ENCODE measurements at regions of chr15 and their contacts with region 1.

Region 1: GRCh38 chr15:101641166-101641764 is 10.9 kb downstream of the TM2D3 start:
- DNase-seq: no peak
- H3K4me3 ChIP-seq: no peak overlapping the region
- CTCF ChIP-seq: peak; percentile 75

Region 2: DNA sequence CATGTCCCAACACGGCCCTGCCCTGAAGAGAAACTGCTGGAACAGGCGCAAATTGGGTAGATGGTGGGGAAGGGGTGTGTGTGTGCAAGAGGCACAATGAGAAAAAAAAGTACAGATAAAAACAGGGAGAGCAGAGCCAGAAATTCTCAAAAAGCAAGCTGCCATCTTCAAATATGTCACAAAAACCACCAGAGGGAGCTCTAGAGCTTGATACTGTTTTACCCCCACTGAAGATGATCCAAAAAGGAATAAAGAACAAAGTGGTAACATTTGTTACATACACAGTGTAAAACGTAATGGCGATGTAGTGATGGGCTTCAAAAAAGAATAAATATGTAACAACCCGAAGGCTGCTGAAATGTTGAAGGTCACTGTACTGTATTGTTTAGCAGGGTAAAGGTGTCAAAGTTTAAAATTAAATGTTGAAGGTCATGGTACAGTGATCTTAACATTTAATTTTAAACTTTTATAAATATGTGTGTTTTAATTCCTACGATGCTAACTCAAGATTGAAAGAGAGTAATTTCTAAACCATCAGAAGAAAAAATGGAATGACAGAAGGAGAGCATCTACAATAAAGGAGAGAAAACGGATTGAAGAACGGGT is 352.3 kb before region 1 on chr15:
- CTCF ChIA-PET with region 1: interaction called, 353 read pairs
- POLR2A ChIA-PET with region 1: no interaction called
- DNase-seq: no peak
- H3K4me3 ChIP-seq: no peak overlapping the region
- CTCF ChIP-seq: peak; percentile 29

Region 3: DNA sequence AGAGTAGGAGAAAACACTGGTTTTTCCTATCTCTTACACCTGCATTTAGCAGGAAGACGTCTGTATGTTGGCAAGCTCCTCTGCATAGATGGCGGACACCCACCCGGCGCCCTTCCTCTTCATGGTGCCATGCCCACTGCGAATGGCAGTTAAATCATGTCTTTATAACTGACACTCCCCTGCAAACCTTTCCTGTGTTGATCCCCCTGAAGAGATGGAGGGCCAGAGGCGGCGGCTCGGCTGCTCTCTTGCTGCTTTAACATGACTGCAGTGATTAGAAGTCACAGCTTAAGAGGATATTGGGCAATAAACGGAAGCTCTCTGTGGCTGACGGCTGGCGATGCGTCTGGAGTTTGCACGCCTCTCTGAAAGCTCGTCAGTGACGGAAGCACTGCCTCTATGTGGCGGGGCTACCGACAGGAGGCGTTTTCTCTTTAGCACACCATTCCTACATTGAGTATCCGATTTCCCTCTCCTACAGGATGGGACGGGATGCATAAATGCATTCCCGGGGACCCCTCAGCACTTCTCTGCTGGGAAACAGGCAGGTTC is 320.7 kb before region 1 on chr15:
- CTCF ChIA-PET with region 1: interaction called, 40 read pairs
- POLR2A ChIA-PET with region 1: no interaction called
- DNase-seq: no peak
- H3K4me3 ChIP-seq: no peak overlapping the region; the same call in 1 of the 2 replicates
- CTCF ChIP-seq: peak; percentile 38

Region 4: GRCh38 chr15:101625980-101626379 is 15.3 kb before region 1 on chr15:
- CTCF ChIA-PET with region 1: interaction called, 49 read pairs
- POLR2A ChIA-PET with region 1: no interaction called
- DNase-seq: no peak
- H3K4me3 ChIP-seq: no peak overlapping the region
- CTCF ChIP-seq: no peak

Region 5: GRCh38 chr15:101657968-101658784 is 16.9 kb after region 1 on chr15:
- CTCF ChIA-PET with region 1: interaction called, 13 read pairs
- POLR2A ChIA-PET with region 1: no interaction called
- DNase-seq: no peak
- H3K4me3 ChIP-seq: no peak overlapping the region
- CTCF ChIP-seq: no peak

Region 6: DNA sequence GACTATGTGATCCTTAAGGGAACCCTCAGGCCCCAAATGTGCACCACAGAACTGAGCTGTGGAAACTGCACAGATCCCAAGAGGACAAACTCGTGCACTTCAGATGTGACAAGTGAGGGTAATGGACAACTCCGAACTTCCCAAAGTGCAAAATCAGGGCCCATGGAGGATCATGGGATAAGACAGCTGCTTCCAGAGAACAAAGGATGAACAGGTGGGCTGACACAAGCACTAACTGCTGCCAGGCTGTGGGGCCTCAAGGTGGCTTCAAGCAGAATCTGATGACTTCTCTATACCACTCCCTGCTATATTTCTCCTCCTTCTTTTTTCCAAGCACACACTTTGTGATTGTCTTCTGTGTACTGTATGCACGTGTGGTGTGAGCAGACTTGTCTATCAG is 77.6 kb after region 1 on chr15:
- CTCF ChIA-PET with region 1: interaction called, 12 read pairs
- POLR2A ChIA-PET with region 1: no interaction called
- DNase-seq: no peak
- H3K4me3 ChIP-seq: no peak overlapping the region
- CTCF ChIP-seq: no peak

Measured in AG04449 (cell line).